GM12878 (cell line): ENCODE measurements at regions of chr11 and their contacts with region 1.

Region 1: DNA sequence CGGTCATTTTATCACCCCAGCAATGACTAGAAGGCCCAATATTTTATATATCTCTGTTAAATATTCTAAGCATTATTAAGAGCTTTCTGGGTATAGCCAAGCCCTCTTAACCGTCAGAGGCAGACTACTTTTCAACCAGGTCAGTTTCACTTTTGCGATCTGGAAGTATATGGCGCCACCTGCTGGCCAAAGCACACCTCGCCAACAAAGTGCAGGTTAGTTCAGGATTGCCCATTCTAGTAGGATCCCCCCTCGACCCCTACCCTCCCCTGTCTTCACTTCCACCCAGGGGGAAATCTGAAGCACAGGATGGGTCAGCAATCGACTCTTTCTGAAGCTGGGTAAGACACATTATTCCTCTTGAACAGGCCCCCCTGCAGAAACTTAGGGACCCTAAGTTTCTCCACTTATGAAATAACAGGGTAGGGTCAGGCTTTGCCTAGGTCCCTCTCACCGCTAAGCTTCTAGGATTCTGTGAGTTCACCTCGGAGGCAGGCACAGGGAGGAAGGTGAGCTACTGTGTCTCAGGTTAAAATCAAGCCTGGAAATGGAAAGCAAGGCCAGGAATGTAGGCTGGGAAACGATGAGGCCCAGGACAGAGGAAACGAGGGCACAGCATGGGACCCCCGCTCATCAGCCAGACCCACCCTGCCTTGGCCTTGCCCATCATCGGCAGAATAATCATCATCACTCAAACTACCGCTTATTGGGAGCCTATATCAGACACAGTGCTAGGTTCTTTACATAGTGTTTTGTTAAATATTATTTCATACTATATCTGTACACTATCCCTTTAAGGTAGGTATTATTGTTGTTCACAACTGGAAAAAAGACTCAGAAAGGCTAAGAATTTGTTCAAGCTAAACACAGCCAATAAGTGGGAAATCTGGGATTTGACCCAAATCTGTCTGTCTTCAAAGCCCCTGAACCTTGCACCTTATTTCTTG is 35.6 kb downstream of the KCNJ1 start:
- DNase-seq: peak; percentile 69
- ATAC-seq: peak; percentile 92
- H3K4me3 ChIP-seq: peak overlapping the region; percentile 28; the same call in 1 of the 2 replicates
- H3K27ac ChIP-seq: peak overlapping the region; percentile 60
- H3K4me1 ChIP-seq: peaks cover 27% of the 10 kb centered on the region
- H3K27me3 ChIP-seq: no peaks in the 10 kb centered on the region
- CTCF ChIP-seq: peak; percentile 80 to 91 (median 85); a peak in 5 of 6 replicates
- EP300 ChIP-seq: no peak
- POLR2A ChIP-seq: no peak
- RAD21 ChIP-seq: peak; percentile 93

Region 2: DNA sequence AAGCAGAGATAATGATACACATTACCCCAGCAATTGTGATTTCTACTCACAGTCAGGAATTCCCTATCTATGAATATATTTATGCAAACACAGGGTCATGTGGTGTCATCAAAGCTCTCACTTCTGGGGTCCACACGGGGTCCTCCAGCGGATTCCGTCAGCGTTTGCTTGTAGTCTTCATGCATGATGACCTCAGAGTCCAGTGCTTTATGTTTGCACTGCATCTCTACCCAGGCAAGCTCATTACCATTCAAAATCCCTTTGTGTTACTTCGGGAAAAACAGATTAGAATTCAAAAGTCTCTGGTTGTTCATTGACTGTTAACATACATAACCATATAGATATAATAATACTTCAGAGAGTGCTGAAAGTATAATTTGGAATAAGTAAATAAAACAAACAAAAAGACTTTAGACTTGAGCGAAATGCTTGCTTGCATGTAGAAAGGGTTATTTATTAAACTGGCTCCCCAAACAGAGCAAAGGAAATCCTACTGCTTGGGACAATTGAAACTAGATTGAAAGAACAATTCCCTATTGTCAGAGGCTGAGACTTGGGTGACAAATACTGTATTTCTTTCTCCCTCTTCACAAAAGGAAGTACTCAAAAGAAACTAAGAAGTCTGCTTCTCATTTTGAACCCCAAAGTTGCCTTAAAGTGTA is 667.2 kb before region 1 on chr11:
- CTCF ChIA-PET with region 1: interaction called, 108 read pairs
- POLR2A ChIA-PET with region 1: no interaction called
- RAD21 ChIA-PET with region 1: interaction called, 4 read pairs
- SMC1A ChIA-PET with region 1: interaction called, 11 read pairs
- in situ Hi-C with region 1: loop called (anchors 5 kb)
- intact Hi-C with region 1: loop called (anchors 5 kb)
- DNase-seq: no peak
- ATAC-seq: no peak
- H3K4me3 ChIP-seq: no peak overlapping the region
- H3K27ac ChIP-seq: no peak overlapping the region
- H3K4me1 ChIP-seq: no peaks in the 10 kb centered on the region
- H3K27me3 ChIP-seq: no peaks in the 10 kb centered on the region; a peak in 2 of 4 replicates
- CTCF ChIP-seq: no peak
- EP300 ChIP-seq: no peak
- POLR2A ChIP-seq: no peak
- RAD21 ChIP-seq: no peak

Region 3: GRCh38 chr11:128522055-128522942 is 309.1 kb before region 1 on chr11:
- CTCF ChIA-PET with region 1: interaction called, 7 read pairs
- POLR2A ChIA-PET with region 1: interaction called, 3 read pairs
- RAD21 ChIA-PET with region 1: interaction called, 12 read pairs
- SMC1A ChIA-PET with region 1: interaction called, 5 read pairs
- in situ Hi-C with region 1: no loop called
- intact Hi-C with region 1: loop called (anchors 10 kb)
- DNase-seq: peak; percentile 59
- ATAC-seq: peak; percentile 85
- H3K4me3 ChIP-seq: peak overlapping the region; percentile 96
- H3K27ac ChIP-seq: peak overlapping the region; percentile 96
- H3K4me1 ChIP-seq: peaks cover 17% of the 10 kb centered on the region
- H3K27me3 ChIP-seq: no peaks in the 10 kb centered on the region
- CTCF ChIP-seq: no peak
- EP300 ChIP-seq: no peak
- POLR2A ChIP-seq: peak; percentile 97
- RAD21 ChIP-seq: 0 out of 2 replicates have a peak, but pooled peaks have one; percentile 9

Region 4: DNA sequence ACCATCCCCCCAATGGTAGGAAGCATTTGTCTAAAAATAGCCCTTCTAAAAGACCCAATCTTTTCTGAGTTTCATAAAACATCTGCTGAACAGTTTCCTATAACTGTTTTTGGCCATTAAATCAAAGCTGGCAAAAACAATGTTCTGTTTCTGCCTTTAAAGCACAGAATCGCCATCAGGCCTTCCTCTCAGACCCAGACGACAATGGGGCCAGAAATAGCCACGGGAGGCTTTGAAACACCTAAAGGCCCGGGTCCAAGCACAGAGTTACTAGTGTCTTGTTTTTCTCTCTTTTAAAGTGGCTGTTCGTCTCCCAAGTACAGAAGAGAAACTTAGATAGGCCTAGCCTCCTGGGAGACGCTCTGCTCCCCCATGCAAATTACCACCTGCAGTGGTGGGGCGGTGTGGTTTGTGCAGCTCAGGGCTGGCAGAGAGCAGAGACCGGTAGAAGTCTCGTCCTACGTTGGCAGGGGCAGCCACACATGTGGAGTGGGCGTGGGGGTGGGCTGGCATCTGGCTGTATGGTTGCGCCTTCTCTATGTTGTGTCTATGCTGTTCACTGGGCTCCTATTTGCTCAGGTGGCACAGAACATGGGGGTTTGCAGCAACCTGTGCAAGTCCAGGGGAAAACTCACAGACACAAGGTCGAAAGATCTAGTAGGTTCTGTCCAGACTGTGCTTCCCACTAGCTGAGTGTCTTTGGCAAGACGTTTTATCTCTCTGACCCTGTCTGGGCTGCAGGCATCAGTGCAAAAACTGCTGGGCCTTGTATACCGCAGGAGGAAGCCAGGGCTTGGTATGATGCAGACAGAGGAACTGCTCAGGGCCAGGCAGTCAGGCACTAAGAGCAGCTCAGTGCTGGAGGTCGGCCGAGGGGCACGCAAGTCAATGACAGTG is 220.5 kb before region 1 on chr11:
- CTCF ChIA-PET with region 1: interaction called, 38 read pairs
- POLR2A ChIA-PET with region 1: no interaction called
- RAD21 ChIA-PET with region 1: interaction called, 7 read pairs
- SMC1A ChIA-PET with region 1: interaction called, 47 read pairs
- in situ Hi-C with region 1: no loop called
- intact Hi-C with region 1: no loop called
- DNase-seq: peak; percentile 93
- ATAC-seq: peak; percentile 97
- H3K4me3 ChIP-seq: peak overlapping the region; percentile 55
- H3K27ac ChIP-seq: peak overlapping the region; percentile 98
- H3K4me1 ChIP-seq: peaks cover 36% of the 10 kb centered on the region
- H3K27me3 ChIP-seq: no peaks in the 10 kb centered on the region
- CTCF ChIP-seq: no peak
- EP300 ChIP-seq: peak; percentile 42 to 86; a peak in 3 of 4 replicates
- POLR2A ChIP-seq: peak; percentile 69
- RAD21 ChIP-seq: no peak; the same call in 1 of the 2 replicates

Region 5: DNA sequence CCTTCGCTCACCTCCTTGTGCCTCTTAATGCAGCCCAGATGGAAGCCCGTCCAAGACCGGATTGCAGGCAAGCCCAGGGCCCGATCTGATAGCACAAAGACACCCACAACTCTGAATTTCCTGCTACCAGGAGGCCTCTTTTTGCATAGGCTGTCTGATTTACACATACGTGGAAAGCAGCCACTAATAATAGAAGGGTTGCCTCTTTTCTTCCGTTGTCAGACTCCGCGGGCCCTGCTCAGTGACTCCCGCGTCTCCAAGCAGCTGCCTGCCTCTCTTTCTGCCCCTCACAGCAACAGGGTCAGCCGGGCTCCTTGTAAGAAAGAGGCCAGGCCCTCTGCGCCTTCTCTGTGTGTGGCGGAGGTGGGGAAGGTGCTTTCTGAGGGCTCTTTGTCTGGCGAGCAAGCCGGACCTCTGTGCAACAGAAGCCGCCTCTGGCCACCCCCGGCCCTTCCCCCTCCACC is 110.9 kb before region 1 on chr11:
- CTCF ChIA-PET with region 1: interaction called, 15 read pairs
- POLR2A ChIA-PET with region 1: no interaction called
- RAD21 ChIA-PET with region 1: interaction called, 16 read pairs
- SMC1A ChIA-PET with region 1: interaction called, 3 read pairs
- in situ Hi-C with region 1: no loop called
- intact Hi-C with region 1: no loop called
- DNase-seq: no peak
- ATAC-seq: peak; percentile 59
- H3K4me3 ChIP-seq: peak overlapping the region; percentile 78
- H3K27ac ChIP-seq: peak overlapping the region; percentile 94
- H3K4me1 ChIP-seq: peaks cover 85% of the 10 kb centered on the region
- H3K27me3 ChIP-seq: no peaks in the 10 kb centered on the region
- CTCF ChIP-seq: no peak
- EP300 ChIP-seq: no peak
- POLR2A ChIP-seq: peak; percentile 84
- RAD21 ChIP-seq: 0 out of 2 replicates have a peak, but pooled peaks have one; percentile 1

Region 6: GRCh38 chr11:128765571-128766549 is 65.6 kb before region 1 on chr11:
- CTCF ChIA-PET with region 1: interaction called, 5 read pairs
- POLR2A ChIA-PET with region 1: no interaction called
- RAD21 ChIA-PET with region 1: interaction called, 3 read pairs
- SMC1A ChIA-PET with region 1: interaction called, 10 read pairs
- in situ Hi-C with region 1: no loop called
- intact Hi-C with region 1: no loop called
- DNase-seq: no peak
- ATAC-seq: no peak
- H3K4me3 ChIP-seq: no peak overlapping the region
- H3K27ac ChIP-seq: no peak overlapping the region
- H3K4me1 ChIP-seq: no peaks in the 10 kb centered on the region
- H3K27me3 ChIP-seq: no peaks in the 10 kb centered on the region
- CTCF ChIP-seq: no peak
- EP300 ChIP-seq: no peak
- POLR2A ChIP-seq: no peak
- RAD21 ChIP-seq: no peak

Region 7: DNA sequence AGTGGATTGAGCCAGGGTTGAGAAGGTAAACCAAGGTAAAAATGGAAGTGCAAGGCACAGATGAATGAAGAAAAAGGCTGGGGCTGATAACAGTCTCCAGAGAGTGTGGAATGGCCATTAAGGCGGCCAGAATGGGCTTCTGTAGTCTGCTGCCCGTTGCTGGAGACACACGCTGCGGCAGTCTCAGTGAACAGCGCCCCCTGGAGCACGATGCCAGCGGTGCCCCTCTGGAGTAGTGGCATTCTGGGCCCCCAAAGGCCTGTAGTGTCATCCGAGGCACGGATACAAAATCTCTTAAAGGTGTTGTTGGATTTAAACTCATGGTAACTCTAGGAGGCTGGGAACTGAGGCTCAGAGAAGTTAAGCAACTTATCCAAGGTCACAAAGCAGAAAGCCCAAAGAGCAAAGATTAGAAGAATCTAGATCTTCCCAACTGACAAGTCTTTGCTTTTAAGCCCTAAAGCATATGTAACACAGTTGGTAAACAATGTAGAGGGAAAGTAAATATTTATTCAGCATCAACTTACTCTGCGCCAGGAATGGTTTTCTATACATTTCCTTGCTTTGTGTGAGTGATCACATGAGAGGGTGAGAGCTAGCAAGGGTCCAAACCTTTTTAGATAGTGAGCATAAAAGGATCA is 17.5 kb after region 1 on chr11:
- CTCF ChIA-PET with region 1: interaction called, 123 read pairs
- POLR2A ChIA-PET with region 1: no interaction called
- RAD21 ChIA-PET with region 1: interaction called, 20 read pairs
- SMC1A ChIA-PET with region 1: interaction called, 89 read pairs
- in situ Hi-C with region 1: no loop called
- intact Hi-C with region 1: no loop called
- DNase-seq: no peak
- ATAC-seq: peak; percentile 100
- H3K4me3 ChIP-seq: no peak overlapping the region
- H3K27ac ChIP-seq: no peak overlapping the region
- H3K4me1 ChIP-seq: peaks cover 4% of the 10 kb centered on the region; the same call in 1 of the 2 replicates
- H3K27me3 ChIP-seq: no peaks in the 10 kb centered on the region
- CTCF ChIP-seq: peak; percentile 81 to 91 (median 88)
- EP300 ChIP-seq: no peak
- POLR2A ChIP-seq: no peak
- RAD21 ChIP-seq: peak; percentile 68